ENCODE measurements at regions of chr2 and their contacts with region 1.

Region 1: GRCh38 chr2:71303849-71304248 is 27.7 kb upstream of the ZNF638 start:
- DNase-seq: no peak
- H3K4me3 ChIP-seq: no peak overlapping the region
- CTCF ChIP-seq: no peak
- POLR2A ChIP-seq: no peak

Region 2: GRCh38 chr2:71510196-71510807 is 206.5 kb after region 1 on chr2:
- intact Hi-C with region 1: loop called (anchors 5 kb)
- DNase-seq: peak; percentile 46 to 93
- H3K4me3 ChIP-seq: no peak overlapping the region
- CTCF ChIP-seq: peak in 1 of 3 donors; percentile 80
- POLR2A ChIP-seq: no peak

Region 3: GRCh38 chr2:72115552-72116546 is 812.0 kb after region 1 on chr2:
- intact Hi-C with region 1: no loop called
- DNase-seq: peak; percentile 92 to 99
- H3K4me3 ChIP-seq: no peak overlapping the region
- CTCF ChIP-seq: no peak
- POLR2A ChIP-seq: no peak